ENCODE measurements at regions of chr16 and their contacts with region 1.

Region 1: GRCh38 chr16:21646721-21647561 is 5.5 kb downstream of the IGSF6 start:
- DNase-seq: peak; percentile 92
- H3K4me3 Mint-ChIP-seq: peak overlapping the region; percentile 78
- H3K27ac Mint-ChIP-seq: peak overlapping the region; percentile 91
- H3K4me1 Mint-ChIP-seq: peaks cover 39% of the 10 kb centered on the region
- H3K27me3 Mint-ChIP-seq: no peaks in the 10 kb centered on the region

Region 2: DNA sequence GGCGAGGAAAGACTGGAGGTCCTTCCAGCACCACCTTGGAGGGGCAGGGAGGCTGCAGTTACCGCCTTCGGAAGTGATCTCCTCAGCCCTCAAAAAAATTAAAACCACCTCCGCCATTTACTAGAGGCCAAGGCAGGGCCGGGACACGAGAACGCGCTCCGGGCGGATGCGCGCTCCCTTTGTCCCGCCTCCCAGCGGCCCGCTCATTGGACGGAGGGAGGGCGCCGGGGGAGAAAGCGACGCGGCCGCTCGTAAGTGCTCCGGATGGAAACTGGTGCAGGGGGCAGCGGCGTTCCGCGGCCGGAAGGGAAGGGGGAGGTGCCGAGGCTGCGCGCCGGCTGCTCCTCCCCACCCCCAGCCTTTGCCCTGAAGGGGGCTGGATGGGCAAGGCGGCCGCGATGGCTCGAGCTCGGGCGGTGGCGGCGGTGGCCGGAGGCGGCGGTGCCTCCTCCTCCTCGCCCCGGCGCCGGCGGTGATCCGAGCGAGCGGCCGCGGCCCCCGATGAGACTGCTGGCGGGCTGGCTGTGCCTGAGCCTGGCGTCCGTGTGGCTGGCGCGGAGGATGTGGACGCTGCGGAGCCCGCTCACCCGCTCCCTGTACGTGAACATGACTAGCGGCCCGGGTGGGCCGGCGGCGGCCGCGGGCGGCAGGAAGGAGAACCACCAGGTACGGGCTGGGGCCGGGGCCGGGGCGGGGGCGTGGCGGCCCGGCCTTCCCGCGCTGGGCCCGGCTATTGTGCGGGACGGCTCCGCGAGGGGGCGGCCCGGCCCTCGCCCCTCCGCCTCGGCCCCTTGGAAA is 47.5 kb before region 1 on chr16 and contains the start of gene METTL9:
- intact Hi-C with region 1: loop called (anchors 2 kb)
- DNase-seq: peak; percentile 99
- H3K4me3 Mint-ChIP-seq: peak within 1 kb of the TSS; percentile 97
- H3K27ac Mint-ChIP-seq: peak within 1 kb of the TSS; percentile 93
- H3K4me1 Mint-ChIP-seq: peaks cover 45% of the 10 kb centered on the region
- H3K27me3 Mint-ChIP-seq: no peaks in the 10 kb centered on the region
- total RNA-seq, gene METTL9: 65.6 and 66.7 TPM in 2 replicates

Region 3: GRCh38 chr16:21626659-21627277 is 20.2 kb before region 1 on chr16:
- intact Hi-C with region 1: loop called (anchors 2 kb)
- DNase-seq: peak; percentile 69
- H3K4me3 Mint-ChIP-seq: peak overlapping the region; percentile 49
- H3K27ac Mint-ChIP-seq: peak overlapping the region; percentile 74
- H3K4me1 Mint-ChIP-seq: peaks cover 33% of the 10 kb centered on the region
- H3K27me3 Mint-ChIP-seq: no peaks in the 10 kb centered on the region

Region 4: DNA sequence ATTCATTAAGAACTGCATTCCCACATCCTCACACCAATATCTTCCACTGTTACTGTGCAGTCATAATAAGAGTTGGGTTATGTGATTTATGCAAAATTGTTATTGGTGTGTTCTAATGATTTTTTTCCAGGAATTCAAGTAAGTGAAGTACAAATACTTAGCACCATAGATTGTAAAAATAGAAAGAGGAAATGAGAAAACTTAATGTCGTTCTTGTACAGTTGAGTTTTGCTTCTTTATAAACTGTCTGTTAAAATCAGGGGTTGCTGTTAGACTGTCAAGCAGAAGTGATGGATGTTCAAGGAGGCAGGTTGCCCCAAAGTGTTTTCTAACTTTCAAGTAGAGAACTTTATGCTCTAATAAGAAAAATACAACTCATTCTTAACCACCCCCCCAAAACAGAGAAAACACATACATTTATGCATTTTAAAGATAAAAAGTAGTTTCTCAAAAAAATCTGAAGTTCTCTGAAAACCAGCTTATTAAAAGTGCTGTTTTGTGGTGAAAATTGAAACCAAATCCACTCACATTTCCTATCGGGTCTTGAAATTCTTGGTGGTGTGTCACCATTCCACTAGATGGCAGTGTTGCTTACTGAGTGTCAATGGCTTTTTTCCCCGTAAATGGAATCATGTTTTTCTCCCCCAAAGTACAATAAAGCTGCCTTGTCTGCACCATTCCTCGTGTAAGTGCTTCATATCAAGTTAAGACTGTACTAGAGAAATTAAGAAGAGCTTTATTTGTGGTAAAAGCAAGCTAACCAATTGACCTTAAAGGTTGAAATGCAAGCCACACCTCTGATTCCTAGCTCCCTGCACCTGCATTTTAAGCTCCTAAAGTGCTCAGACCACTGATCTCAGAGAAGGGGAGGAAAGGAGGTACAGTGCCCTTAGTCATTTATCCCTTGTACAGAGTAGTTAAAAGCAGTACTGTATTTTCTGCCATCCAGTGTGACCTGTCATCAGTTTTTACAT is 10.1 kb after region 1 on chr16:
- intact Hi-C with region 1: loop called (anchors 2 kb)
- DNase-seq: peak; percentile 86
- H3K4me3 Mint-ChIP-seq: peak overlapping the region; percentile 26
- H3K27ac Mint-ChIP-seq: no peak overlapping the region
- H3K4me1 Mint-ChIP-seq: peaks cover 39% of the 10 kb centered on the region
- H3K27me3 Mint-ChIP-seq: no peaks in the 10 kb centered on the region